ENCODE measurements at regions of chr16 and their contacts with region 1.

Region 1: GRCh38 chr16:28538733-28539596 is at the start of gene NUPR1:
- DNase-seq: peak; percentile 81 to 97
- H3K4me3 ChIP-seq: peak within 1 kb of the TSS; percentile 60 to 74
- H3K27ac ChIP-seq: peak within 1 kb of the TSS; percentile 80 to 95
- H3K4me1 ChIP-seq: peaks cover 9 to 20% of the 10 kb centered on the region in 2 donors
- H3K27me3 ChIP-seq: no peaks in the 10 kb centered on the region
- CTCF ChIP-seq: no peak
- total RNA-seq, gene NUPR1: 290 TPM

Region 2: DNA sequence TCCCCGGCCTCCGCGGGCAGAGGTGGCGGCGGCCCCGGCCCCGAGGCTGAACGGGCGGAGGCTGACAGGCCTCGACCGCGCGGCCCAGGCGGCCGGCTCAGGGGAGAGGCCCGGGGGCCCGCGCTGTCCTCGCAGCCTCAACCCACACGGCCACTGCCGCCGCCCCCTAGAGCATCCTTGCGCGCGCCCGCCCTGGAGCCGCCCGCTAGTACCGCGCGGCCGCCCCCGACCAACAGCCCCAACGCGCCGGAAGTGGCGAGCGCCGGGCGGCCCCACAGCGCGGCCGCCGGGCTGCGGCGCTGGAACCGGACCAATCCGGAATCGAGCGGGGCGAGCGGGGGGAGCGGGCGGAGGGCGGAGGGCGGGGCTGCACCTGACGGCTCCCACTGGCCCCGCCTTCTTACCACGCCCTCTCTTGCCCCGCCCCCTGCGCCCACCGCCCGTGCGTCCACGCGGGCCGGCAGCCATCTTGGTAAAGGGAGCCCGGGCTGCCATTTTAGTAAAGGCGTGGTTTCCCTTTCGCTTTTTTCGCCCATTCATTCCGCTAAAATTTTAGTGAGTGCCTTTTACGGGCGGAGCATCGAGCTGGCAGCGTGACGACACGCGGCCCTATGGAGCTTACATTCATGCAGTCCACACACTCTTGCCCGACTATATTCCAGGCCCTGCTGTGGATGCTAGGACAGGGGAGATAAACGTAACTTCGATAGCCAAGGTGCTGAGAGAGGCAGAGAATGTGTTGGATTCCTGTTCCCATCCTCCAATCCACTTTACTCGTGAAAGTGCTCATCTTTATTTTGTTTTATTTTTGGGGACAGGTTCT is 327.0 kb before region 1 on chr16 and contains the start of gene XPO6:
- intact Hi-C with region 1: loop called (anchors 10 kb)
- DNase-seq: peak; percentile 66 to 97
- H3K4me3 ChIP-seq: peak within 1 kb of the TSS; percentile 92 to 96
- H3K27ac ChIP-seq: peak within 1 kb of the TSS; percentile 86 to 94
- H3K4me1 ChIP-seq: peaks cover 0 to 11% of the 10 kb centered on the region in 2 donors
- H3K27me3 ChIP-seq: no peaks in the 10 kb centered on the region
- CTCF ChIP-seq: peak in 1 of 3 experiments; percentile 12
- total RNA-seq, gene XPO6: 180 TPM

Region 3: GRCh38 chr16:28553776-28554633 is 15.0 kb after region 1 on chr16 and contains the start of gene SGF29:
- intact Hi-C with region 1: loop called (anchors 1 kb)
- DNase-seq: peak; percentile 53 to 95
- H3K4me3 ChIP-seq: peak within 1 kb of the TSS; percentile 61 to 62
- H3K27ac ChIP-seq: peak within 1 kb of the TSS; percentile 87 to 96
- H3K4me1 ChIP-seq: peaks cover 0 to 7% of the 10 kb centered on the region in 2 donors
- H3K27me3 ChIP-seq: no peaks in the 10 kb centered on the region
- CTCF ChIP-seq: peak in 2 of 3 experiments; percentile 32 to 35
- total RNA-seq, gene SGF29: 14.0 TPM

Region 4: GRCh38 chr16:28924732-28925385 is 385.9 kb after region 1 on chr16 and contains the start of gene RABEP2:
- intact Hi-C with region 1: no loop called
- DNase-seq: peak; percentile 45 to 94
- H3K4me3 ChIP-seq: peak within 1 kb of the TSS; percentile 80 to 90
- H3K27ac ChIP-seq: peak within 1 kb of the TSS; percentile 96 to 99
- H3K4me1 ChIP-seq: peaks cover 6 to 9% of the 10 kb centered on the region in 2 donors
- H3K27me3 ChIP-seq: no peaks in the 10 kb centered on the region
- CTCF ChIP-seq: no peak
- total RNA-seq, gene RABEP2: 64.5 TPM